ENCODE measurements at regions of chr7 and their contacts with region 1.

Region 1: GRCh38 chr7:140902303-140902953 is 22.3 kb downstream of the BRAF start:
- DNase-seq: no peak
- H3K4me3 Mint-ChIP-seq: peak overlapping the region; percentile 41
- H3K27ac Mint-ChIP-seq: peak overlapping the region; percentile 85
- H3K4me1 Mint-ChIP-seq: peaks cover 54% of the 10 kb centered on the region
- H3K27me3 Mint-ChIP-seq: no peaks in the 10 kb centered on the region

Region 2: DNA sequence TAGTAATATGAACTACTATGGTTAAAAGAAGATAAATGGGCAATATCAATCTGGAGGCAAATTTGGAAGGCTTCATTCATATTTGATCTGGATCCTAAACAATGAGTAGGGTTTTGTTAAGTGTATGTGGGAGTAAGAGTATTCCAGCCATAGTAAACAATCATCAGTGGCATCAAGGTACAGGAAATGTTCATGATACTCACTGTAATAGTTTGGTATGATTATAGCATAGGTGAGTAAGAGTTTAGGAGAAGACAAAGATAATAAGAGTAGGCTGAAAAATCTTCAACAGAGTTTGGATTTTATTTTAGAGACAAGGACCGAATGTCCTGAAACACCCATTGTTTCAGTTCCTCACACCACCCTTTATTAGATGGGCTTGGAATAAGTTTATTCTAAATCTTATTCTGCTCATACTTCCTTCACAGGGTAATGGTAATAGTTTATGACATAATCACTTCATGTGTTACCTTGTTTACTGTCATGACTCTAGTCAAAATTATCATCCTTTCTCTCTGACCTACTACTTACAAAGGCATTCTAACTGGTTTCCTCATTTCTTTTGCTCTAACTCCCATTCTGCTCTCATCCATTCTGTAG is 16.6 kb before region 1 on chr7:
- CTCF ChIA-PET with region 1: no interaction called
- POLR2A ChIA-PET with region 1: interaction called, 5 read pairs
- intact Hi-C with region 1: loop called (anchors 2 kb)
- DNase-seq: no peak
- H3K4me3 Mint-ChIP-seq: no peak overlapping the region
- H3K27ac Mint-ChIP-seq: no peak overlapping the region
- H3K4me1 Mint-ChIP-seq: peaks cover 56% of the 10 kb centered on the region
- H3K27me3 Mint-ChIP-seq: no peaks in the 10 kb centered on the region

Measured in activated CD4-positive, alpha-beta memory T cell treated with anti-CD3 and anti-CD28 coated beads for 36 hours (primary cell).